ENCODE measurements at regions of chr2 and their contacts with region 1.

Region 1: GRCh38 chr2:196468394-196468793 is 171.1 kb upstream of the CCDC150 start:
- DNase-seq: no peak
- ATAC-seq: no peak

Region 2: GRCh38 chr2:196592912-196593881 is 124.8 kb after region 1 on chr2:
- intact Hi-C with region 1: loop called in 1 of 2 experiments (anchors 10 kb)
- DNase-seq: peak; percentile 50
- ATAC-seq: peak; percentile 84 to 87

Region 3: GRCh38 chr2:196750982-196751635 is 282.7 kb after region 1 on chr2:
- intact Hi-C with region 1: loop called in 1 of 2 experiments (anchors 10 kb)
- DNase-seq: peak; percentile 55
- ATAC-seq: peak; percentile 68

Region 4: DNA sequence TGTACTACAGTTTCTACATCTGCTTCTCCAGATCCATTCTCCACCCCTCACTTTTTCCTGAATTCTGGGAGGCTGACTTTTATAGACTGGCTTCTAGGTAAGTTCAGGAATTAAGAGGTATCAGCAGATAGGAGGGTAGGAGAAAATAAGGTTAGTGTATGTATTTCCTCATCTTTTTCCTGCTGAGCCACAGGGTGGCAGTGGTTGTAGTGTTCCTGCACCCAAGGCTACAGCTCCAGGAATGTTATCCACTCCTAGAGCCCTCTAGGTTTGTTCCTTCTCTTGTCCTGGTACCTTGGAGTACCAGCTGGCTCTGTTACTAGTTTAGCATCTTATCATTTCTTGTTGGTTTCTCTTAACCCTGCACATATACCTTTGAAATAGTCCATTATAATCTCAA is 381.5 kb after region 1 on chr2:
- intact Hi-C with region 1: no loop called
- DNase-seq: no peak
- ATAC-seq: peak in 1 of 2 donors; percentile 57

Measured in left cardiac atrium (tissue), 4 donors.